ENCODE measurements at regions of chr9 and their contacts with region 1.

Region 1: DNA sequence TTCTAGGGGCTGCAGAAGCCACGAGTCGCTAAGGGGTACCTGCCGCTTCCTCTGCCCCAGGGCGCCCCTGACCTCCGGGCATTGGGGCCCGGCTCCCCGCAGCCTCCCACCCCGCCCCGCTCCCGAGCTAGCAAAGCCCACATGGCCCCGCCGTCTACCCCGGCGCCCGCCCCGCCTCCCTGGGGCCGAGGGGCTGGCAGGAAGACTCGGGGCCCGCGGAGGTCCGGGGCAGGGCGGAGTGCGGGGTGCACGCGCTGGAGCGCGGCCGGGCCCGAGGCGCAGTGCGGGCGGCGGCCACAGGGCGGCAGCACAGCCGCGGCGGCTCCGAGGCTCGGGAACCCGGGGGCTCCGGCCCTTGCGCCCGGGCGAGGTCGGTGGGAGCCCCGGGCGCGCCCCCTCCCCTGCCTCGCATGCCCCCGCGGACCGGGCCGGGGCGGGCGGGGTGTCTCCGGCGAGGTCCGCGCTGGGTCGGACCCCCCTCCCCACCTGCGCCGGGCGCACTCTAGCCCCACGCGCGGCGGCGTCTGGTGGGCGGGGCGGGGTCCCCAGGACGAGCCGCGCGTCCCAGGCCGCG is 6.7 kb downstream of the NRARP start:
- DNase-seq: no peak
- H3K4me3 ChIP-seq: peak overlapping the region; percentile 63
- H3K27ac ChIP-seq: peak overlapping the region; percentile 92
- H3K4me1 ChIP-seq: peaks cover 58% of the 10 kb centered on the region
- H3K27me3 ChIP-seq: peaks cover 60% of the 10 kb centered on the region
- CTCF ChIP-seq: peak; percentile 77

Region 2: DNA sequence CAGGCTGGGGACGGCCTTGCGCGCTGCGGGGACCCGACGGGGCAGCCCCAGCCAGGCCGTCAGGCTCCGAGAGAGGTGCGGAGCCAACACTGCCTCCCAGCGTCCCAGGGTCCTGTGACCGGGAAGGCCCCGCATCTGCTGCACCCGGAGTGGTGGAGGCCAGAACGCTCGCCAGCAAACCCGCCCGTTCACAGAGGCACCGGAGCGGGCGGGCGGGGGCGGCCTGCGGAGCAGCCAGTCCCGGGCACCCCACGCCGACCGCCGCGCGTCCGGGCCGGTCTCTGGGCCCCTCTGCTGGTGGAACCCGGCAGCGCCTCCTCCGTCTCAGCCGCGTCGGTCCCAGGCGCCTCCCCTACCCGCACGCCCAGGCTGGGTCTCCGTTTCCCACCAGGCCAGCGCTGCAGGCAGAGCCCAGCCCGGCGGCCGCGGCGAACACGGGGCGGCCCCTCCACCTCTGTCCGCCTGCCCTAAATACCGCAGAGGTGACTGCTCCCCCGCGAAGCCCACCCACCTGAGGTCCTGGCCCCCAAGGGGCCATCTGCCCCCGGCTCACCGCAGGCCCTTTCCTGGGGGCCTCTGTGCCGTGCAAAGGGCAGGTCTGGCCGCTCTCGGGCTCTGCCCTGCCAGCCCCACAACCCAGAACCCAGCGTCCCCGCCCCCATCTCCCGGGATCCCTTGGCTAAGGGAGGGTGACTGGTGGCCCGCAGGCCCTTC is 111.7 kb after region 1 on chr9:
- intact Hi-C with region 1: loop called (anchors 5 kb)
- DNase-seq: peak; percentile 72
- H3K4me3 ChIP-seq: peak overlapping the region; percentile 65
- H3K27ac ChIP-seq: peak overlapping the region; percentile 72
- H3K4me1 ChIP-seq: peaks cover 56% of the 10 kb centered on the region
- H3K27me3 ChIP-seq: no peaks in the 10 kb centered on the region
- CTCF ChIP-seq: peak; percentile 93